Activated CD4-positive, alpha-beta memory T cell treated with anti-CD3 and anti-CD28 coated beads for 36 hours (primary cell): ENCODE measurements at regions of chr6 and their contacts with region 1.

Region 1: DNA sequence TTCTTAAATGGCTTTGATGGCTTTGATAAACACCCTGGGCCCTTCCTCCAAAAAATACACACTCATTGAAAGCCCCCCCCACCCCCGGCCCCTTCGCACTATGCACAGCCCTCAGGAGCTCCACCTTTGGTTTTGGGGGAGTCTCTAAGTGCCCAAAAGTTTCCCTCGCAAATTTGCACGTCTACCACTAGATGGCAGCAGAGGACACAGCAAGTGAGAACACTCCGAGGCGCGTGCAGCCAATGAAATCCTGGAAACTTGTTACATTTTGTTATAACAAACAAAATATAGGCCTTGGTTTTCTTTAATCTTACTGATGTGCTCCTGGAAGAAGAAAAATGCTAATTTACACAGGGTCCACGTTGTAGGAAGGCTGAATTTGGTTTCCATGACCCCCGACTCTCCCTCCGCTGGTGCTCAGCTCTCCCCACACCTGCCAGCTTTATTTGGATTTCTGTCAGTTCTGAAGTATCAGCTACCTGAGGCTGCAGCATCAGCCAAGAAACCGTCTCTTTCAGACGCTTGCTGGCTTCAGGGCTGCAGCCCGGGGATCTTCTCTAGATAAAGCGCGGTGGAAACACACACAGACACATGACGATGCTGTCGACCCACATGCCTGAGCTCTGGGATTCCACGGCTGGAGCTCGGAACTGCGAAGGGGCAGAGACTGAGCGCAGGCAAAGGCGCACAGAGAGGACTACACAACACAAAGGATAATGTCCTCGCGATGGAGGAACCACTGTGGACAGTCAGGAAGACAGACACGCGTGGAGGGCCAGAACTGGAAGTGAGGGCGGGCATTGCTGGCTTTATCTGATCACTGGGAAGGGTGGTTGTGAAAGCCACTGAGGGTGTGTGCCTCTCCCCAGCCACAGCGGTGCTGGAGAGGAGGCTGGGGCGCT is 148.4 kb upstream of the RPS6KA2 start:
- DNase-seq: peak; percentile 69
- H3K4me3 Mint-ChIP-seq: no peak overlapping the region
- H3K27ac Mint-ChIP-seq: no peak overlapping the region
- H3K4me1 Mint-ChIP-seq: no peaks in the 10 kb centered on the region
- H3K27me3 Mint-ChIP-seq: no peaks in the 10 kb centered on the region

Region 2: GRCh38 chr6:166707045-166707444 is 68.4 kb before region 1 on chr6:
- CTCF ChIA-PET with region 1: no interaction called
- POLR2A ChIA-PET with region 1: no interaction called
- intact Hi-C with region 1: no loop called
- DNase-seq: peak; percentile 51
- H3K4me3 Mint-ChIP-seq: no peak overlapping the region
- H3K27ac Mint-ChIP-seq: no peak overlapping the region
- H3K4me1 Mint-ChIP-seq: no peaks in the 10 kb centered on the region
- H3K27me3 Mint-ChIP-seq: no peaks in the 10 kb centered on the region

Region 3: GRCh38 chr6:166786704-166787293 is 11.4 kb after region 1 on chr6:
- CTCF ChIA-PET with region 1: interaction called, 15 read pairs
- POLR2A ChIA-PET with region 1: no interaction called
- intact Hi-C with region 1: no loop called
- DNase-seq: no peak
- H3K4me3 Mint-ChIP-seq: no peak overlapping the region
- H3K27ac Mint-ChIP-seq: no peak overlapping the region
- H3K4me1 Mint-ChIP-seq: no peaks in the 10 kb centered on the region
- H3K27me3 Mint-ChIP-seq: peaks cover 1% of the 10 kb centered on the region

Region 4: DNA sequence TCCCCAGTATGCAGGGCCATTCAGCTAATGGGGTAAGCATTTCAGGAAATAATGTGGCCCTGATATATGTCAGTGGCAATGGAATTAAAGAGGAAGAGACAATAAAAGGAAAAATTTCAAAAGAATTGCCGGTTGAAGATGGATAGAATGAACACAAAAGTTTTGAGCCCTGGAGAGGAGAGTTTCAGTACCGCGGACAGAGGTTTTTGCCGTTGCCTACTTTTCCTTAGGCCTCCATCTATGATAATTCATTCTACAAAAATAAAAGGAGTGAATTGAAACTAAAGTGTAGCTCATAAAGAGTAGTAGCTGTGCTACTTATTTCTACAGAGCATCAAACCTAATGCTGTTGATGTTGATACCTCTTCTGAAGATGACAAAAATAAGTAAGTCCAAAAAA is 40.2 kb after region 1 on chr6:
- CTCF ChIA-PET with region 1: no interaction called
- POLR2A ChIA-PET with region 1: no interaction called
- intact Hi-C with region 1: no loop called
- DNase-seq: no peak
- H3K4me3 Mint-ChIP-seq: no peak overlapping the region
- H3K27ac Mint-ChIP-seq: no peak overlapping the region
- H3K4me1 Mint-ChIP-seq: no peaks in the 10 kb centered on the region
- H3K27me3 Mint-ChIP-seq: no peaks in the 10 kb centered on the region

Region 5: GRCh38 chr6:166989427-166990032 is 214.1 kb after region 1 on chr6:
- CTCF ChIA-PET with region 1: interaction called, 58 read pairs
- POLR2A ChIA-PET with region 1: no interaction called
- intact Hi-C with region 1: no loop called
- DNase-seq: peak; percentile 53
- H3K4me3 Mint-ChIP-seq: no peak overlapping the region
- H3K27ac Mint-ChIP-seq: no peak overlapping the region
- H3K4me1 Mint-ChIP-seq: peaks cover 24% of the 10 kb centered on the region
- H3K27me3 Mint-ChIP-seq: no peaks in the 10 kb centered on the region

Region 6: GRCh38 chr6:166999145-166999883 is 223.9 kb after region 1 on chr6 and contains the start of gene CEP43:
- CTCF ChIA-PET with region 1: interaction called, 11 read pairs
- POLR2A ChIA-PET with region 1: no interaction called
- intact Hi-C with region 1: no loop called
- DNase-seq: peak; percentile 90
- H3K4me3 Mint-ChIP-seq: peak within 1 kb of the TSS; percentile 85
- H3K27ac Mint-ChIP-seq: peak within 1 kb of the TSS; percentile 85
- H3K4me1 Mint-ChIP-seq: peaks cover 28% of the 10 kb centered on the region
- H3K27me3 Mint-ChIP-seq: no peaks in the 10 kb centered on the region
- total RNA-seq, gene CEP43: 19.5 to 21.3 TPM

Region 7: GRCh38 chr6:167285077-167285770 is 509.8 kb after region 1 on chr6:
- CTCF ChIA-PET with region 1: interaction called, 9 read pairs
- POLR2A ChIA-PET with region 1: no interaction called
- intact Hi-C with region 1: loop called (anchors 10 kb)
- DNase-seq: no peak
- H3K4me3 Mint-ChIP-seq: no peak overlapping the region
- H3K27ac Mint-ChIP-seq: no peak overlapping the region
- H3K4me1 Mint-ChIP-seq: no peaks in the 10 kb centered on the region
- H3K27me3 Mint-ChIP-seq: peaks cover 8% of the 10 kb centered on the region